Adrenal gland (tissue), 19 donors: ENCODE measurements at regions of chr1 and their contacts with region 1.

Region 1: GRCh38 chr1:203625628-203626019 is 1.0 kb upstream of the ATP2B4 start:
- DNase-seq: peak in 4 of 7 donors; percentile 32 to 69 (median 48)
- H3K4me3 ChIP-seq: peak overlapping the region in 1 of 4 donors; percentile 78
- H3K27ac ChIP-seq: peak overlapping the region in 2 of 5 donors; percentile 79 to 83
- H3K4me1 ChIP-seq: peaks cover 32 to 34% of the 10 kb centered on the region in 2 donors
- H3K27me3 ChIP-seq: no peaks in the 10 kb centered on the region
- CTCF ChIP-seq: peak in 3 of 6 experiments; percentile 18 to 40 (median 33)
- POLR2A ChIP-seq: no peak

Region 2: GRCh38 chr1:203692565-203693470 is 67.2 kb after region 1 on chr1:
- intact Hi-C with region 1: loop called (anchors 5 kb)
- DNase-seq: peak; percentile 78 to 95 (median 90)
- H3K4me3 ChIP-seq: no peak overlapping the region
- H3K27ac ChIP-seq: peak overlapping the region; percentile 70 to 85 (median 78)
- H3K4me1 ChIP-seq: peaks cover 22 to 50% of the 10 kb centered on the region in 2 donors
- H3K27me3 ChIP-seq: no peaks in the 10 kb centered on the region
- CTCF ChIP-seq: peak in 1 of 6 experiments; percentile 9
- POLR2A ChIP-seq: no peak